Aorta (tissue), 5 donors: ENCODE measurements at regions of chr3 and their contacts with region 1.

Region 1: DNA sequence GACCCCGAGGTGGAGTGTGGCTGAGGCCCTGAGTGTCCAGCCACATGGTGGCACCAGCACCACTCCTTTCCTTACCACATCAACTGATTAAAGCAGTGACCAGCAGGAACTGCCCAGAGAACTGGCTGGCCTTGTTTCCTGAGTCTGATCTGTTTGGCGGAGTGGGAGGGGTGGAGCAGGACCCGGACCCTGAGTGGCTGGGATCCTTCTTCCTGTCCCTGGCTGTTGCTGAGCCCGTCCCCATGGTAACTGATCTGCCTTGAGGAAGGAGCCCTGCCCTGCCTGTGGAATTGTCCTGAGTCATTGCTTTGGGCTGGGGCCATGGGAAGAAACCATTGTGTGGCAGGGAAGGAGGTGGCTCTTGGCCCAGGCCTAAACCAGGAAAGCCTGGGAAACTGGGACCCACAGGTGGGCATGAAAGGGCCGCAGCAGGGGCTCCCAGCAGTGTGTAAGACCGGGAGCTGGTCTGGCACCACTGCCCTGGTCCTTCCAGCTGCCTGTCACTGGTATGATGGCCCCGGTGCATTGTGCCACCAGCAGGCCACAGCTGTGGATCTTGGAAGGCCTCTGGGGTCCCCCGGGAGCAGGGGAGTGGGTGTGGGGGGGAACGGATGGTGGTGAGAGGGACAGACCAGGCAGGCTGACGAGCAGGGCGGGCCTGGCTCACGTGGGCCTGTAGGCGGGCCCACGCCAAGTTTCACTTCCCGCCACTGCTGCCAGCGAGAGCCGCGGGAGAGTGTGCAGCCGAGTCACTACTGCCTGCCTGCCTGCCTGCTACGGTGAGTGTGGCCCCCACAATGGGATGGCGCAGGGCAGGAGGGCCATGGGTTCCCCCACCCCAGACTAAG is 19.2 kb downstream of the ATRIP start:
- DNase-seq: peak; percentile 98 to 99
- ATAC-seq: peak; percentile 96
- H3K4me3 ChIP-seq: peak overlapping the region in 1 of 2 donors; percentile 26
- H3K27ac ChIP-seq: peak overlapping the region; percentile 50 to 94
- H3K4me1 ChIP-seq: no peaks in the 10 kb centered on the region
- H3K27me3 ChIP-seq: no peaks in the 10 kb centered on the region

Region 2: GRCh38 chr3:48548729-48549705 is 83.3 kb after region 1 on chr3:
- intact Hi-C with region 1: loop called (anchors 1 to 2 kb)
- DNase-seq: peak; percentile 91 to 95
- ATAC-seq: peak; percentile 93
- H3K4me3 ChIP-seq: no peak overlapping the region
- H3K27ac ChIP-seq: no peak overlapping the region
- H3K4me1 ChIP-seq: no peaks in the 10 kb centered on the region
- H3K27me3 ChIP-seq: no peaks in the 10 kb centered on the region

Region 3: GRCh38 chr3:48685602-48686511 is 220.1 kb after region 1 on chr3 and contains the start of gene NCKIPSD:
- intact Hi-C with region 1: loop called (anchors 5 kb)
- DNase-seq: peak; percentile 93 to 98
- ATAC-seq: peak; percentile 96
- H3K4me3 ChIP-seq: peak within 1 kb of the TSS; percentile 57 to 79
- H3K27ac ChIP-seq: peak within 1 kb of the TSS in 1 of 2 donors; percentile 60
- H3K4me1 ChIP-seq: no peaks in the 10 kb centered on the region
- H3K27me3 ChIP-seq: no peaks in the 10 kb centered on the region
- total RNA-seq, gene NCKIPSD: 26.4 to 31.9 TPM